Activated naive CD4-positive, alpha-beta T cell treated with anti-CD3 and anti-CD28 coated beads for 36 hours (primary cell): ENCODE measurements at regions of chr3 and their contacts with region 1.

Region 1: GRCh38 chr3:52270252-52270754 is 8.1 kb downstream of the WDR82 start:
- DNase-seq: peak; percentile 41
- H3K4me3 Mint-ChIP-seq: peak overlapping the region; percentile 80
- H3K27ac Mint-ChIP-seq: peak overlapping the region; percentile 98
- H3K4me1 Mint-ChIP-seq: peaks cover 89% of the 10 kb centered on the region
- H3K27me3 Mint-ChIP-seq: no peaks in the 10 kb centered on the region

Region 2: GRCh38 chr3:51982782-51983577 is 287.3 kb before region 1 on chr3 and contains the start of gene ACY1:
- CTCF ChIA-PET with region 1: no interaction called
- intact Hi-C with region 1: no loop called
- DNase-seq: peak; percentile 89
- H3K4me3 Mint-ChIP-seq: peak within 1 kb of the TSS; percentile 95
- H3K27ac Mint-ChIP-seq: peak within 1 kb of the TSS; percentile 91
- H3K4me1 Mint-ChIP-seq: peaks cover 29% of the 10 kb centered on the region
- H3K27me3 Mint-ChIP-seq: no peaks in the 10 kb centered on the region
- total RNA-seq, gene ACY1: 62.1 to 68.9 TPM

Region 3: DNA sequence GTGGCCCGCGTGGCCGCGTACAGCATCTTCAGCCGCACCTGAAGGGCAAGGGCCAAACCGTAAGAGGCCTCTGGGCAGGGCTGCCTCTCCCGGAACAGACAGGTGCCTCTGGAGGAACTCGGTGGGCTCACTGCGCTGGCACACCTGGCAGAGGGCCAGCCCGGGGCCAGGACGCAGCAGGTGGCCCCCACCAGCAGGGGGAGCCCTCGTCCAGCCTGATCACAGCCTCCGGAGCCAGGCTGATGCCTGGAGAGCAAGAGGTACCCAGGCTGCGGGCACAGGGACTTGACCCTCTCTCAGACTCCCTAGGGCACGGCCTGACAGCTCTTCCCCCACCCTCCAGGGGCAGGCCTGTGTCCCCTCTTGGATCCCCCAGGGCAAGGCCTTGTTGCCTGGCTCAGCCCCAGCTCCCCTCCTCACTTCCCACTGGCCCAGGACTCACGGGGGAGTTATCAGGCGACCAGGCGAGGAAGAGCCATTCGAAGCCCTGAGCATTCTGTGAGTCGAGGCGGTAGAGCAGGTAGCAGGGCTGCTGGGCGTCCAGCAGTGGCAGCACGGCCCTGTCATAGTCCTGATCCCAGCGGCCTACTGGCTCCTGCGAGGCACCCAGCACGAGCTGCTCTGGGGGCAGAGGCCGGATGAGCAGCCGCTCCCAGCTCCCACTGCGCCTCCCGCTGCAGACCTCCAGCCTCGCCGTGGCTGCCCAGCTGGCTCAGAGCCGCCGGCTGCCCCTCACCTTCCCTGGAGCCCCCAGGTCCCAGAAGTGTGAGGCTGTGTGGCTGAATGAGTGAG is 38.6 kb before region 1 on chr3:
- CTCF ChIA-PET with region 1: interaction called, 12 read pairs
- intact Hi-C with region 1: no loop called
- DNase-seq: peak; percentile 89
- H3K4me3 Mint-ChIP-seq: no peak overlapping the region
- H3K27ac Mint-ChIP-seq: peak overlapping the region; percentile 88
- H3K4me1 Mint-ChIP-seq: peaks cover 45% of the 10 kb centered on the region
- H3K27me3 Mint-ChIP-seq: no peaks in the 10 kb centered on the region

Region 4: DNA sequence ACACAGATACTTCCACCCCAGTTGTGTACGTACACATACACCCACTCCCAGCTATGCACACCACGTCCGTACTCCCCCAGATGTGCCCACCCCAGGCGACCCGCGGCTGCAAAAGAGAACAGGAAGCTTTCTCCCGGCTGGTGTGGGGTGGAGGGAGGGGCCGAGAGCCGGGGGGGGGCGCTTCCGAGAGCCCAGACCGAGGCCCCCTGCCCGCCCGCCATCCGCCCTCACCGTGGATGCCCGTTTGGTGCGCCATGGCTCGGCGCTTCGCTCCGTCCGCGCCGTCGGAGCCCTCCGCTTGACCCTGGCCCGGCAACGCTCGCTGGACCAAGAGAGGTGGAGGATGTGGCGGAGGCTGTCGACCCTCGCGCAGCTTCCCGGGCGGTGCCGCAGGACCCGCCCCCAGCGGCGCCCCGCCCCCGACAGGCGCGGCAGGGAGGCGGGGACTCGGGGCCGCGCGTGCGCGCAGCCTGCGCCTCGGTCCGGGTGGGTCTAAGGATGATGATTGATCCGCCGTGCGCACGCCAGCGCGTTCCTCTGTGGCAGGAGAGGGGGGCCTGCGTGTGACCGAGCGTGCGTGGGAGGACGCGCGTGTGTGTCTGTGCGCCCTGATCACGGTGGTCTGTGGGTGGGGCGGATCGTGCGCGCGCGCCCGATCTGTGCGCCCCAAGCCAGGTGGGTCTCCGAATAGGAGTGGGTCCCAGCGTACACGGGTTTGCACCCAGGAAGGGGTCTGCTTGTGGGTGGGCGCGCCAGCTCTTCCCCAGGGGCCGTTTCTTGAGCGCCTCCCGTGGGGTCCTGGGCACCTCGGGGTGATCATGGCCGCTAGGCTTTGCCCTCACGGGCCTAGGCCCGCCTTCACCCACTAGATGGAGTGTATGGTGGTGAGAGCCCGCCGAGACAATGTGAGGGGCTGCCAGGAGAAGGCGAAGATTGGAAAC is 31.3 kb before region 1 on chr3 and contains the start of gene TWF2:
- CTCF ChIA-PET with region 1: interaction called, 61 read pairs
- intact Hi-C with region 1: loop called (anchors 1 kb)
- DNase-seq: peak; percentile 83
- H3K4me3 Mint-ChIP-seq: peak within 1 kb of the TSS; percentile 92
- H3K27ac Mint-ChIP-seq: peak within 1 kb of the TSS; percentile 98
- H3K4me1 Mint-ChIP-seq: peaks cover 75% of the 10 kb centered on the region
- H3K27me3 Mint-ChIP-seq: no peaks in the 10 kb centered on the region
- total RNA-seq, gene TWF2: 89.1 to 91.3 TPM

Region 5: DNA sequence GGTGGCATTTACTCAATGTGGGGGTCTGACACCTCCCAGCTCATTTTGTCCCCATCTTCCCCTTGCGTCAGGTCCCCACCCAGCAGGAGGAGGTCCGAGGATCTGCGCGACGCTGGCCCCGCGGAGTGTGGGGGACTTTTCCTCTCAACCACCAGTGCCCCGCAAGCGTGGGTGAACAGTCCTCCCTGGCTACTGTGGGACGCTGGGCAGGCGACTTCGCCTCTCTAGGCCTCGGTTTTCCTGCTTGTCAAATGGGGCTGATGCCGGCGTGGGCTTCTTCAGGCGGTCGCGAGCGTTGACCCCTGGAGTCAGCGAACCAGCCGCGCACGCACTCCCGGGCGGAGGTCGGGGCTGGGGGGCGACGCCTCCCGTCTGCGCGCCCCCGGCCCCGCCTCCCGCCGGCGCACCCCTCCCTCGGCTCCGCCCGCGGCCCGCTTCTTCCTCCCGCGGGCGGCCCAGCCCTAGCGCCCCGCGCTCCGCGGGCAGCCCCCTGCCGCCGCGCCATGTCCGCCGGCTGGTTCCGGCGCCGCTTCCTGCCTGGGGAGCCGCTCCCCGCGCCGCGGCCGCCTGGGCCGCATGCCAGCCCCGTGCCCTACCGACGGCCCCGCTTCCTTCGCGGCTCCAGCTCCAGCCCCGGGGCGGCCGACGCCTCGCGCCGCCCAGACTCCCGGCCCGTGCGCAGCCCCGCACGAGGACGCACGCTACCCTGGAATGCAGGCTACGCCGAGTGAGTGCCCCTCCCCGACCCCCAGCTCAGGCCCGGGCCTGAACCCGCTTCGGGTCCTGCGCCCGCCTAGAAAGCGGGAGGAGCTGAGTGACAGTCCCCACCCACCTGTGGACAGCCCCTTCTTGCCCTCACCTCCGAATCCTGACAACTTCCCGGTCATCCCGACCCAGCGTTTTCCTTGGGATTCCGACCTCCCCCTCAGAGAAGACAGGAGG is 24.7 kb before region 1 on chr3 and contains the start of gene PPM1M:
- CTCF ChIA-PET with region 1: interaction called, 61 read pairs
- intact Hi-C with region 1: loop called (anchors 1 kb)
- DNase-seq: peak; percentile 54
- H3K4me3 Mint-ChIP-seq: peak within 1 kb of the TSS; percentile 79
- H3K27ac Mint-ChIP-seq: peak within 1 kb of the TSS; percentile 90
- H3K4me1 Mint-ChIP-seq: peaks cover 81% of the 10 kb centered on the region
- H3K27me3 Mint-ChIP-seq: no peaks in the 10 kb centered on the region
- total RNA-seq, gene PPM1M: 107 to 108 TPM

Region 6: GRCh38 chr3:52253314-52254304 is 16.7 kb before region 1 on chr3:
- CTCF ChIA-PET with region 1: interaction called, 15 read pairs
- intact Hi-C with region 1: loop called (anchors 1 kb)
- DNase-seq: peak; percentile 89
- H3K4me3 Mint-ChIP-seq: peak overlapping the region; percentile 65
- H3K27ac Mint-ChIP-seq: peak overlapping the region; percentile 99
- H3K4me1 Mint-ChIP-seq: peaks cover 89% of the 10 kb centered on the region
- H3K27me3 Mint-ChIP-seq: no peaks in the 10 kb centered on the region

Region 7: GRCh38 chr3:52259035-52259434 is 11.3 kb before region 1 on chr3:
- CTCF ChIA-PET with region 1: interaction called, 15 read pairs
- intact Hi-C with region 1: no loop called
- DNase-seq: no peak
- H3K4me3 Mint-ChIP-seq: no peak overlapping the region
- H3K27ac Mint-ChIP-seq: peak overlapping the region; percentile 62
- H3K4me1 Mint-ChIP-seq: peaks cover 95% of the 10 kb centered on the region
- H3K27me3 Mint-ChIP-seq: no peaks in the 10 kb centered on the region